PC-3 (cell line): ENCODE measurements at regions of chr6 and their contacts with region 1.

Region 1: DNA sequence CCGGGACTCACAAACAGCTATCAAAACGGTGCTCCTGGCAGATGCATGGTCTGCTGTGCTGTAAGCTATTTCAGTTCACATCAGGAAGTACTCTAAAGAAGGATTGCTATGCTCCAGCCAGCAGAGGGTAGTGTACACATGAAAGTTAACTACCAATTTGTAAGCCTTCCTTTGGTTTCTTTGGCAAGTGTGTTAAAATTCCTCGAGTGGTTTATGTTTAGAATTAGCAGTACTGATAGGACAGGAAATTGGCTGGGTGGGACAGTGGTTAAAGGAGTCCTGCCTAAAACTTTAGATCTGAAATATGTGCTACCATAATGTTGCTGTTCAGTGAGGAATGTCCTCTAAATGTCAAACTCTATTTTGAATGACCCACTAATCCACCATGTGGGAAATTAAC is 47.4 kb downstream of the TRMT11 start:
- DNase-seq: peak; percentile 56
- ATAC-seq: peak; percentile 94
- H3K4me3 ChIP-seq: no peak overlapping the region
- H3K27ac ChIP-seq: no peak overlapping the region
- H3K4me1 ChIP-seq: peaks cover 9% of the 10 kb centered on the region
- H3K27me3 ChIP-seq: no peaks in the 10 kb centered on the region
- CTCF ChIP-seq: peak; percentile 69

Region 2: DNA sequence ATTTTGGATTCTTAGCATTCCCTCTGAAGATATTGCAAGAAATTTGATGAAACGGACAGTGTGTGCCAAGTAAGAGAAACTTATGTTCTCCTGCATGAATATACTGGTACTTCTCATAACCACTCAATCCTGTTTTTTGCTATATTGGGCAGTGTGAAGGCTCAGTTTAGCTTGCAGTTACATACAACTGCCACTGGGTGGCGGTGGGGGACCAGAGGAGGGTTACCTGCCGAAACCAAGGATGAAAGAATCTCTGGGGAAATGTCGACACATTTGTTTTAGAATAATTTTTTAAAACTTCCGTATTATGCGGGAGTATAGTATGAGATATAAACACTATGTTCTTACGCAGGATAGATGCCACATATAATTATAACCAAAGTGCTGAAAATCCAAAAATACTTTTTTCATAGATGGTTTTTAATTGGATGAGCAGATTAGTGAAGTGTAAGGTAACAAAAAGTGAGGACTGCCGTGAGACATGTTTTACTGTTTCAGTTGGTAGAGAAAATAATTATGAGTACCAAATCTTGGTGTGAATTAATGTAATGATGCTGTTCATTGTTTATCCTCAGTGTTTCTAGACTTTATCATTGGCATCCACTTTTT is 37.6 kb before region 1 on chr6:
- CTCF ChIA-PET with region 1: no interaction called
- POLR2A ChIA-PET with region 1: no interaction called
- intact Hi-C with region 1: loop called (anchors 5 kb)
- DNase-seq: peak; percentile 71
- ATAC-seq: peak; percentile 89
- H3K4me3 ChIP-seq: no peak overlapping the region
- H3K27ac ChIP-seq: no peak overlapping the region
- H3K4me1 ChIP-seq: peaks cover 3% of the 10 kb centered on the region; the same call in 1 of the 2 replicates
- H3K27me3 ChIP-seq: no peaks in the 10 kb centered on the region
- CTCF ChIP-seq: peak; percentile 90

Region 3: DNA sequence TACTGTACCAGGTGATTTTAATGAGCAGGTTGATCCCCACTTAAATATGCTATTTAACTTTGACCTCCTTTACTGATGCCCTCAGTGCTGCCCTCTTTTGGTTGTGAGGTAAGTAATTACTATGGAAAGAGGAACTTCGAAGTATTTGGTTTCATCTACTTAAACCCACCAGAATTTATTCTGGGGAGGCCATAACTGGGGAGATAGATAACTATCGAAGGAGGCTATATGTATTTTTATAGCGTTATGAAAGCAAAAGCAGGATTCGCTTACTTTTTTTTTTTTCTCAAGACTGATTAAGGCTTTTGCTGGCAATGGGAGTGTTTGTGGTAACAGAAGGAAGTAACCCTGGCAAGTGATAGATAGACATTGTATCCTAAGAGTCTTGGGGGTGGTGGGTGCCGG is 137.3 kb after region 1 on chr6:
- CTCF ChIA-PET with region 1: no interaction called
- POLR2A ChIA-PET with region 1: no interaction called
- intact Hi-C with region 1: loop called (anchors 1 kb)
- DNase-seq: peak; percentile 59
- ATAC-seq: peak; percentile 60
- H3K4me3 ChIP-seq: no peak overlapping the region
- H3K27ac ChIP-seq: no peak overlapping the region
- H3K4me1 ChIP-seq: peaks cover 5% of the 10 kb centered on the region
- H3K27me3 ChIP-seq: no peaks in the 10 kb centered on the region
- CTCF ChIP-seq: peak; percentile 69

Region 4: GRCh38 chr6:126339796-126340609 is 306.3 kb after region 1 on chr6 and contains the start of gene CENPW:
- CTCF ChIA-PET with region 1: no interaction called
- POLR2A ChIA-PET with region 1: no interaction called
- intact Hi-C with region 1: loop called (anchors 10 kb)
- DNase-seq: peak; percentile 88
- ATAC-seq: peak; percentile 83
- H3K4me3 ChIP-seq: peak within 1 kb of the TSS; percentile 99
- H3K27ac ChIP-seq: peak within 1 kb of the TSS; percentile 59
- H3K4me1 ChIP-seq: peaks cover 12% of the 10 kb centered on the region
- H3K27me3 ChIP-seq: no peaks in the 10 kb centered on the region
- CTCF ChIP-seq: no peak
- total RNA-seq, gene CENPW: 28.9 and 33.6 TPM in 2 replicates

Region 5: GRCh38 chr6:126657561-126658175 is 624.0 kb after region 1 on chr6:
- CTCF ChIA-PET with region 1: no interaction called
- POLR2A ChIA-PET with region 1: no interaction called
- intact Hi-C with region 1: loop called (anchors 10 kb)
- DNase-seq: peak; percentile 58
- ATAC-seq: peak; percentile 43; the same call in 1 of the 2 replicates
- H3K4me3 ChIP-seq: no peak overlapping the region
- H3K27ac ChIP-seq: no peak overlapping the region
- H3K4me1 ChIP-seq: no peaks in the 10 kb centered on the region
- H3K27me3 ChIP-seq: no peaks in the 10 kb centered on the region
- CTCF ChIP-seq: peak; percentile 68

Region 6: GRCh38 chr6:127120787-127121636 is 1087.3 kb after region 1 on chr6:
- CTCF ChIA-PET with region 1: no interaction called
- POLR2A ChIA-PET with region 1: no interaction called
- intact Hi-C with region 1: loop called (anchors 10 kb)
- DNase-seq: peak; percentile 64
- ATAC-seq: peak; percentile 72
- H3K4me3 ChIP-seq: no peak overlapping the region
- H3K27ac ChIP-seq: no peak overlapping the region
- H3K4me1 ChIP-seq: no peaks in the 10 kb centered on the region; the same call in 1 of the 2 replicates
- H3K27me3 ChIP-seq: peaks cover 56% of the 10 kb centered on the region
- CTCF ChIP-seq: peak; percentile 83